GM23248 (cell line): ENCODE measurements at regions of chr1 and their contacts with region 1.

Region 1: DNA sequence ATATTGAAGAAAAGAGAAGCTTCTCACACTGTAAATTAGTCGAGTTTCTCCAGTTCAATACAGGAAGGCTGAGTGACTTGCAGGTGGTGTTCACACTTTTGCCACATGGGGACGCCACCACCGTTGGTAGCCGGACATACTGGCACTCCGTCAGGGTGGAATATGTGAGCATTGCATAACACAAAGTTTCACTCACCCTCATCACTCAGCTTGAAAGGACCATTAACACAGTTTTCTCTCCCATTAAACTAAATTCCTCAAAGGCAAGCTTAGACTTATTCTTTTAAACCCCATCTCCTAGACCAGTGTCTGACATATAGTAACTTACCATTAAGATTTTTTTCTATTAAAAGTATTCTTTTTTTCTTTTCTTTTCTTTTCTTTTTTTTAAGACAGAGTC is 105.3 kb upstream of the SERBP1 start:
- DNase-seq: peak; percentile 93
- H3K4me3 ChIP-seq: no peak overlapping the region
- H3K27ac ChIP-seq: peak overlapping the region; percentile 27; the same call in 1 of the 2 replicates
- H3K4me1 ChIP-seq: peaks cover 8% of the 10 kb centered on the region
- H3K27me3 ChIP-seq: no peaks in the 10 kb centered on the region

Region 2: DNA sequence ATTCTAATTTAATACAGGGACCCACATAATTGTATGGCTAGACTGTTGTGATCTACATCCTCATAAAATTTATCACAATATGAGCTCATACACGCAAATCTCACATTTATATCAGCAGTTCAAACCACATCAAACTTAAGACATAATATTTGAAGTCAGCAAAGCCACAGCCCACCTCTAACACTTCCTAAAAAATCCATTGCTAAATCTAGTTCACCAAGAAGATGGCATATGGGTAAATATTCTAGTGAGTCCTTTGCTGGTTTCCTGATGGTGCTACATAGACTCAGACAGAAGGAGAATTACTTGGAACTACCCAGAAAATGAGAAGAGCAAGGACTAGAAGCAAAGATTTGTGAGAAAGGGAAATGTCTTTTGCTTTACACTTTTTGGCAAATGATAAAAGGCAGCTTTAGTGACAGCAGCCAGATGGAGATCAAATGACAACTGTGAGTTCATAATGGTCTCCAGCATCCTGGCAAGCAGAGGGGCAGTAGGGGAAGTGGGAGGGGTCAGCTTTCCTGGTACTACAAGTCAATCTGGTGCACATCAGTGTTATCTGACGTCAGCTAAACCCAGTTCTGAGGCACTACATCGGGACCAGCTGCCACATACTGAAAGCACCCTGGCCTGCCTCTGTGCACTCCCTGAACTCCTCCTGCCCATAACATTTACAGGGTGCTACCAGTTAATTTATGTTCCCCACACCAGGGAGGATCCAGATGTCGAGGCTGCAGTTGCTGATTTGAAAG is 139.0 kb after region 1 on chr1:
- in situ Hi-C with region 1: no loop called
- DNase-seq: peak; percentile 45
- H3K4me3 ChIP-seq: no peak overlapping the region
- H3K27ac ChIP-seq: no peak overlapping the region
- H3K4me1 ChIP-seq: no peaks in the 10 kb centered on the region
- H3K27me3 ChIP-seq: no peaks in the 10 kb centered on the region

Region 3: DNA sequence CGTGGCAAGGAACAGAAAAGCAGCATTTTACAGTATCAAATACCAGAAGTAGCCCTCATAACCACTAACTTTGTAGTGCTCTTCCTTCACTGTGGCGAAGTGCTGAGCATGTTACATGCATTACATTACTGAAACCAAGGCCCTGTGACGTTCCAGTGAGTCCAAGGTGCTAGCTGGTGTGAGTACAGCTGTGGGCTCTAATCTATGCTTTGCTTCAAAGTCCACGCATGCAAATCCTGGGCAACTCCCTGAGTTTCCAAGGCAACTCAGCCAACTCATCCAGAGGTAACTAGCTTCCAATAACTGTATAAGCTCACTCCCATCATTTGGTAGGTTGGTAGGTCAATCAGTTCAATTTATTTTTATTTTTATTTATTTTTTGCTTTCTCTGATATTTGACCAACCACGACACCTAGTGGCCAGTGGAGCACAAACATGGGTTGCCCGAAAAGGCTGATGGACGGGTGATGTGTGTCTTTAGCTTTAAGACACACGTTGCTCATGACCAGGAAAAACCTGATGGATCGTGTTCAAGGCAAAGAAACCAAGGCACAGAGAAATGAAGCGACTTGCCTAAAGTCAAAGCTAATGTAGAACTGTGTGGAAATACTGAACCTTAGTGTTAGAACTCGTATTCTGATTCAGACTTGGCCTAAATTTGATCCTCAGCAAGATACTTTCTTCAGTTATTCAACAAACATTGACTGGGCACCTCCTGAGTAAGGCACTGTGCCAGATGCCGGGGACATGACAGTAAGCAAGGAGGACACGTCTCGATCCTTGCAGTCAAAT is 224.8 kb after region 1 on chr1:
- in situ Hi-C with region 1: loop called (anchors 5 kb)
- DNase-seq: peak; percentile 91
- H3K4me3 ChIP-seq: 0 out of 2 replicates have a peak overlapping the region, but pooled peaks have one; percentile 19
- H3K27ac ChIP-seq: peak overlapping the region; percentile 82
- H3K4me1 ChIP-seq: peaks cover 42% of the 10 kb centered on the region
- H3K27me3 ChIP-seq: no peaks in the 10 kb centered on the region

Region 4: GRCh38 chr1:67832737-67833601 is 297.5 kb after region 1 on chr1 and contains the start of gene GNG12:
- in situ Hi-C with region 1: loop called (anchors 25 kb)
- DNase-seq: peak; percentile 90
- H3K4me3 ChIP-seq: peak within 1 kb of the TSS; percentile 89
- H3K27ac ChIP-seq: peak within 1 kb of the TSS; percentile 92
- H3K4me1 ChIP-seq: peaks cover 41% of the 10 kb centered on the region
- H3K27me3 ChIP-seq: no peaks in the 10 kb centered on the region
- total RNA-seq, gene GNG12: 309 and 315 TPM in 2 replicates

Region 5: GRCh38 chr1:68346188-68346808 is 810.8 kb after region 1 on chr1:
- in situ Hi-C with region 1: loop called (anchors 25 kb)
- DNase-seq: peak; percentile 49
- H3K4me3 ChIP-seq: no peak overlapping the region
- H3K27ac ChIP-seq: no peak overlapping the region
- H3K4me1 ChIP-seq: no peaks in the 10 kb centered on the region
- H3K27me3 ChIP-seq: no peaks in the 10 kb centered on the region; the same call in 1 of the 2 replicates